IMR-90 (cell line): ENCODE measurements at regions of chr11 and their contacts with region 1.

Region 1: DNA sequence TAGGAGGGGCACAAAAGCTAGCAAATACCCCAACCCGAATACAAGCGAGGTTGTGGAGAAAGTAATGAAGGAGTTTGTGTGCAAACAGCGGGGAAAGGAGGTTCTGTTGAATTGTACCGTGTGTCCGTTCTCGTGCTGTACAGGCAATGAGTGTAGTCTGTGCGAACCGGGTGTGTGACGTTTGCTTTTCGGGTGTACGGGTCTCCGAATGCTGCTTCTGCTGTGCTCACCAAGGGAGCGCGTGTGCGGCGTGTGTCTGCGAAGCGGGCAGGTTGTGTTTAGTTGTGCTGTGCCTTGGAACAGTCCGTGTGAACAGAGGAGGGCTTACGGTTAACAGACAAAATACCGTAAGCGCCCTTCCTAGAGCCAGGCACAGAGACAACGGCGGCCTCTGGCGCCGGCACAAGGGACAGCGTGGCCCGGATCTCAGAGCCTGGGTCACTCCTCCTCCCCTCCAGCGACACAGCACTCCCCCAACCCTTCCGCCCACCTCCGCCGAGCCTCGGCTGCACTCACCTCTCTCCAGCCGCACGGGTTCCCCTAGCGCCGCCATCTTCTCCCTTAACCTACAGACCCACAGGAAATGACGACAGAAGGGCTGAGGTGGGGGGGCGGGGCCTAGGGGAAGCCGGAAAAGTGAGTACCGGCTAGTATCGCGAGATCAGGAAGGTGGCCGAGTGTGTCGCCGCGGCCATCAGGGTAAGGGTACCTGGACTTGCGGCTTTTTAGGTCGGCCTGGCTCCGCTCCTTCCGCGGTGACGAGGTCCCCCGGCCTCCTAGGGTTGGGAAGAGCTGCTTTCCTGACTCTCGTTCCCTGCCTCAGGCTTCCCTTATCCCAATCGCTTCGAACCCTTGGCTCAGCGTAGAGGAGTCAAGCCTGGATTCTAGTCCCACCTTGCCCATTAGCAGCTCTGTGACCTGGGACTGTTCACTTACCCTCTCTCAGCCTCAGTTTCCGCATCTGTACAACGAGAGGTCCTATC is at the start of gene LIN7C:
- DNase-seq: peak; percentile 92
- ATAC-seq: peak; percentile 95
- H3K4me3 ChIP-seq: peak within 1 kb of the TSS; percentile 73
- H3K27ac ChIP-seq: peak within 1 kb of the TSS; percentile 87
- H3K4me1 ChIP-seq: peaks cover 2% of the 10 kb centered on the region; the same call in 1 of the 2 replicates
- H3K27me3 ChIP-seq: no peaks in the 10 kb centered on the region
- CTCF ChIP-seq: 0 out of 2 replicates have a peak, but pooled peaks have one; percentile 2
- POLR2A ChIP-seq: peak; percentile 95
- RAD21 ChIP-seq: no peak
- total RNA-seq, gene LIN7C: 25.5 and 58.3 TPM in 2 replicates

Region 2: DNA sequence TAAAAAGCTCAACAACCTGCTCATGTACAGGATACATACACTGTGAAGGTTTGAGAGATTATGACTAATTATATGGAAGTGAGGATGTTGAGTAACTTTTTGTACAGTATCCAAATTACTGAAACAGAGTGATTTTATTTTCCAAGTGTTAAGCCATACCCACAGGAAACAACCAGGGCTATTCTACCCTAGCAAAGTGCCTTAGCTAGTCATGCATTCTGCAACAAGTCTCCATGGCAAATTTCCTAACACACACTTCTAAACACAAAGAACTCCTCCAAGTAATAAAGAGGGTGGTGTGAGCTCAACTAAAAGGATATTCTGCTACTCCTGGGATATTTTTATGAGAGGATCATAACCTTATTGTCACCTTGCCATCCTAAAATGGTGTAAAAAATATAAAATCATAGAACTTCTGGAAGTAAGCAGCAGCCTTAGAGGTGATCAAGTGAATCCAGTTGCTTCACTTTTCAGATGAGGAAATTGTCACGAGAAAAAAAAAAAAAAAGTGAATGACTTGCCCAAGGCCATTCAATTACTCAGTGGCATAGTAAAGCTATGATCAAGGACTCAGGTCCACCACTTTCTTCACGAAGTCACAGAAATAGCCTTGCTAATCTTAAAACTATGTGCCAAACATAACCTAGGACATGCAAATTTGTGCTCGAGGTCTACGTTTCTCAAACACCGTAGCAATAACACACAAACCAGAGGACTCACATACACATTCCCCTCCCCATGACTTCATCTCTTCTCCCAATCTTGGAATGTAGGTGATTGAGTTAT is 38.1 kb before region 1 on chr11:
- CTCF ChIA-PET with region 1: no interaction called
- POLR2A ChIA-PET with region 1: no interaction called
- dilution Hi-C with region 1: no loop called
- in situ Hi-C with region 1: no loop called
- intact Hi-C with region 1: no loop called
- DNase-seq: peak; percentile 53
- ATAC-seq: no peak
- H3K4me3 ChIP-seq: no peak overlapping the region
- H3K27ac ChIP-seq: no peak overlapping the region
- H3K4me1 ChIP-seq: peaks cover 10% of the 10 kb centered on the region
- H3K27me3 ChIP-seq: no peaks in the 10 kb centered on the region
- CTCF ChIP-seq: no peak
- POLR2A ChIP-seq: no peak
- RAD21 ChIP-seq: no peak

Region 3: DNA sequence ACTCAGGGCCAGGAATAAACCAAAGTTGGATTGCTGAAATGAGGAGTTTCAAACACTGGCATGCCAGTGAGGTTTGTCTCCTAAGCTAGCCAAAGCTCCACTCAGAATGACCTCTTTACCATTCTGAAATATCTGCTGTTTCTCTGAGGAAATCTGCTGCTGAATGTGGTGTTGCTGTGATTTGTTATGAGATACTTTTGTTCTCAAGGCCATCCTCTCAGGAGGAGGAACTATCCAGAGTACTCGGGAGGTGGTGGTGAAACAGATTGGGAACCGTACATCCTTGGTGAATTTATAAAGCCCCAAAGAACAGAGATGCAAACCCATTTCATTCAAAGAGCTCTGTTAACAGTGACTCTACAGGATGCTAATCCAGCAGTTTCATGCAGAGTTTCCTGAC is 143.3 kb after region 1 on chr11:
- CTCF ChIA-PET with region 1: no interaction called
- POLR2A ChIA-PET with region 1: no interaction called
- dilution Hi-C with region 1: no loop called
- in situ Hi-C with region 1: no loop called
- intact Hi-C with region 1: loop called (anchors 2 kb)
- DNase-seq: peak; percentile 50
- ATAC-seq: peak; percentile 2
- H3K4me3 ChIP-seq: no peak overlapping the region
- H3K27ac ChIP-seq: no peak overlapping the region
- H3K4me1 ChIP-seq: no peaks in the 10 kb centered on the region
- H3K27me3 ChIP-seq: no peaks in the 10 kb centered on the region
- CTCF ChIP-seq: no peak
- POLR2A ChIP-seq: no peak; the same call in 1 of the 2 replicates
- RAD21 ChIP-seq: no peak

Region 4: DNA sequence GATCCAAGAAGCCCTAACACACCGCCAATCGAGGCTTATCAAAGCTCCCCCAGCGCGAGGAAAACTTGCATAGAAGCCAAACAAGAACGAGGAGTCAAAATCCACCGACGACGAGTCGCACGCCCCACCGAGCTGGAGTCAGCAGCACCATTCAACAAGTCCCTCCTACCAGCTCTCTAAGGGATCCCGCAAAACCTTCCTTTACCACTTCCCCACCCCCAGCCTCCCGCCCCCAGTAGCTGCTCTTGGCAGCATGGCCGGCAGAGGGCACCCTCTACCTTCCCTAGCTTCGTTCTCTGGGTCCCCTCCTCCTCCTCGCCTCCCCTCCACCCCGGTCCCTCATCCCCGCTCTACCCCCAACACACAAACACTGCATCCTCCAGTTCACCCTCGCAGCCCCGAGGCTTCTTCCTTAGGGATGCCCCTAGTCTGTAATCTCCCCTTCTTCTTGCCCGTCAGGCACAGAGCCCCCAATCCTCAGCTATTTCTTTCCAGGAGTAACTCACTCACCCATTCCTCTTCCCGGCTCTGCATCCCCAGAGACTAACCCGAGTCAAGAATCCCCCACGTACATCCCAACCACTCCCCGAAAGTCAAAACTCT is 192.5 kb after region 1 on chr11:
- CTCF ChIA-PET with region 1: no interaction called
- POLR2A ChIA-PET with region 1: no interaction called
- dilution Hi-C with region 1: no loop called
- in situ Hi-C with region 1: no loop called
- intact Hi-C with region 1: no loop called
- DNase-seq: peak; percentile 92
- ATAC-seq: peak; percentile 53
- H3K4me3 ChIP-seq: peak overlapping the region; percentile 85
- H3K27ac ChIP-seq: peak overlapping the region; percentile 92
- H3K4me1 ChIP-seq: peaks cover 6% of the 10 kb centered on the region; the same call in 1 of the 2 replicates
- H3K27me3 ChIP-seq: no peaks in the 10 kb centered on the region
- CTCF ChIP-seq: peak; percentile 84
- POLR2A ChIP-seq: peak; percentile 82
- RAD21 ChIP-seq: peak; percentile 85

Region 5: DNA sequence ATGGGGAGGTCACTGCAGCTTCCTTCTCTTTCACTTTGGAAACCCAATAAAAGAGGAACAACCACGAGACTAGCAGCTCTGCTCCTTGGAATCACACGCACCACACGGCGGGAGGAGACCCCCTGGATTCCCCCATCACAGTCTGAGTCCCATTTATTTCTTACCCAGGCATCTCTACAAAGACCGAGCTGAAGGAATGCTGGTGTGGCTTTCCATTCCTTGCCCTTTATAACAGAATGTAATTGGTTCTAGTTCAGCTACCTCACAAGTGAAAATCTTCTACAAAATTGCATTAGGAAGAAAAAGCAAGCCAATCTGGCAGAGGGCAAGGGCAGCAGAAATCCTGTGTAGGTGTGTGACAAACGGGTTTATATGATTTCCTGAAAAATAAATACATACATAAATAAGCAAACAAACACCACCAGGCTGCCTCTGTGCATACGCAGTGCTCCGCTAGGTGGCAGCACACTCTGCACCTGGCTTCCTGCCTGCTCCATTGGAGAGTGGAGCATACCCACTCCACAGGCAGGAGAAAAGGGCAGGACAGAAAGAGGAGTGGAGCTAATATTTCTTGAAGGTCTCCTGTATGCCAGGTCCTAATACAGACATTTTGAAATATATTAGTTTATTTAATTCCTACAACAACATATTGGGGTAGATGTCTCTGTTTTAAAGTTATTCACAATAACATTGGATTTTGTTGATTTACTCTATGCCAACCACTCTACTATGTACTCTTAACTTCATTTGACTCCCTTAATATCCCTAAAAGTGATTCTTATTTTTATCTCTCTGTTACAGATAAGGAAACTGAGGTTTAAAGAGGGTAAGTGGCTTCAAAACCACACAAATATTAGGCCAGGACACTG is 1837.2 kb after region 1 on chr11:
- CTCF ChIA-PET with region 1: no interaction called
- POLR2A ChIA-PET with region 1: no interaction called
- dilution Hi-C with region 1: no loop called
- in situ Hi-C with region 1: loop called (anchors 25 kb)
- intact Hi-C with region 1: loop called (anchors 10 kb)
- DNase-seq: peak; percentile 34
- ATAC-seq: peak; percentile 87
- H3K4me3 ChIP-seq: no peak overlapping the region
- H3K27ac ChIP-seq: no peak overlapping the region
- H3K4me1 ChIP-seq: no peaks in the 10 kb centered on the region
- H3K27me3 ChIP-seq: no peaks in the 10 kb centered on the region
- CTCF ChIP-seq: peak; percentile 67
- POLR2A ChIP-seq: no peak
- RAD21 ChIP-seq: peak; percentile 50